AG04449 (cell line): ENCODE measurements at regions of chr7 and their contacts with region 1.

Region 1: GRCh38 chr7:50467817-50468610 is 17.9 kb upstream of the FIGNL1 start:
- DNase-seq: no peak
- H3K4me3 ChIP-seq: 0 out of 2 replicates have a peak overlapping the region, but pooled peaks have one; percentile 15
- CTCF ChIP-seq: peak; percentile 90

Region 2: GRCh38 chr7:50486512-50486911 is 18.5 kb after region 1 on chr7:
- CTCF ChIA-PET with region 1: interaction called, 10 read pairs
- POLR2A ChIA-PET with region 1: no interaction called
- DNase-seq: no peak
- H3K4me3 ChIP-seq: no peak overlapping the region
- CTCF ChIP-seq: no peak

Region 3: GRCh38 chr7:50632561-50633413 is 164.8 kb after region 1 on chr7:
- CTCF ChIA-PET with region 1: interaction called, 11 read pairs
- POLR2A ChIA-PET with region 1: no interaction called
- DNase-seq: no peak
- H3K4me3 ChIP-seq: no peak overlapping the region
- CTCF ChIP-seq: peak; percentile 72

Region 4: GRCh38 chr7:51067757-51068156 is 599.7 kb after region 1 on chr7:
- CTCF ChIA-PET with region 1: interaction called, 16 read pairs
- POLR2A ChIA-PET with region 1: no interaction called
- DNase-seq: peak; percentile 16
- H3K4me3 ChIP-seq: no peak overlapping the region
- CTCF ChIP-seq: peak; percentile 55

Region 5: DNA sequence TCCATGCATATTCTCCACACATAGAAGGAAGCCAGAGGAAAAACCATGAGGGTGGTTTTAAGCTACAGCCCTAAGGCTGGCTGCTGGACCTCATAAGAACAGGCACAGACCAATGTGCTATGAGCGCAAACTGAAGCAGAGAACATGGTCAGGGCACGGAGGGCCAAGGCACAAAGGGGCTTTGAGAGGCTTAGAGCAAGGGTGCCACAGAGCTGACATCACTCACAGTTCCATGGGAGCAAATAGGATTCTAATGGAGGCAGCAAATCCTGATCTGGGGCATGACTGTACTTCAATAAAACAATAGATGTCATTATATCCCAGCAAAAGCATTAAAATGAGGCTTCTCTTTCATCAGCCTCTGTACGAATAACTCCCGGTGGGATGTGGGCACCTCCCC is 686.2 kb after region 1 on chr7:
- CTCF ChIA-PET with region 1: interaction called, 236 read pairs
- POLR2A ChIA-PET with region 1: no interaction called
- DNase-seq: no peak
- H3K4me3 ChIP-seq: no peak overlapping the region
- CTCF ChIP-seq: no peak